Mucosa of descending colon (tissue), 3 donors: ENCODE measurements at regions of chr9 and their contacts with region 1.

Region 1: DNA sequence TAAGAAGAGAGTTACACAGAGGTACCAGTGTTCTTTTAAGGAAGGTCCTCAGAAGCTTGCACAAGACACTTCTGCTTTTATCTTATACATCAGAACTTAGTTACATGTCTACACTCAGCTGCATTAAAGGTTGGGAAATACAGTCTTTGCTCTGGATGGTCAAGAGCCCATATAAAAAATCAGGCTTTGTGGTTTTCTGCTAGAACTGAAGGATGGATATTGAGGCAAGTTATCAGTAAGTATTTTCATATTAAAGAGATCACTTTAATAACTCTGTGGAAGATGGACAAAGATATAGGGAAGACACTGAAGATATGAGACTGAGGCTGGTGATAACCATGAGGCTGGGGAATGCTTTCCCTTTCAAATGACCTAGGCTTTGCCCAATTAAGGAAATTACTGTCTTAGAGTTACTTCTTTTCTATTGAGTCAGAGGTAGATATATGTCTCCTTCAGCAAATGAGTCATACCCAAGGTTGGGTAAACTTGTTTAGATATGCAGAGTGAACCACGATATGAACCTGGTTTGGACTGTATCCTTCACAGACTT is 87.0 kb upstream of the TNC start:
- DNase-seq: no peak
- ATAC-seq: no peak
- H3K4me3 ChIP-seq: no peak overlapping the region
- H3K4me1 ChIP-seq: no peaks in the 10 kb centered on the region
- CTCF ChIP-seq: no peak

Region 2: DNA sequence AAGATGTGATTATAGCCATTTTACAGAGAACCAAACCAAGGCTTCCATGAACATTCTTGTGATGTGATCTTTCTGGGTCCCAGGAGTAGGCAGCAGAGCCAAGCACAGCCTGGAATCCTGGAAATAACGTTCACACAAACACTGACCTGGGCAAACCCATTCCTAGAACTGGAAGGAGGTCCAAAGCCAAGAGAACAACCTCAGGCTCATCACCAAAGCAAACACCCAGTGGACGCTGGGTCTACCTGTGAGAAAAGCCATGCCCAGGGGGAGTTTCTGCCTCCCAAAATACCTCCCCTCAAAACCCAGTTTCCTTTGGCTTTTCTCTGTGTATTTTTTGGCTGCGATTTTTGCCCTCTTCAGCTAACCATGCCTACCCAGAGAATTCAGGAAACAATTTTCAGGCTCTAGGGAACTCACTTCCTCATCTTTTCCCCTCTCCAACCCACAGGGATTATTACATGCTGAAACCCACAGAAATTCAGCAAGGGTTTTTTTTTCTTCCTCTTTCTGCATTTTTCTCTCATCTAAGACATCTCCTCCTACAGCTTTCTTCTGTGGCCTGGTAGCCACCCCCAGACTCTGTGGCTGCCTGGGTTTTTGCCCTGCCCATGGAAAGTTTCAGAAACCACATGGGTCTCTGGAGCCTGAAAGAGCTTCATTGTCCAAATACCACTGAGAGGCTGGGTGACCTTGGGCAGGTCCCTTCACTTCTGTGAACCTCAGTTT is 162.0 kb before region 1 on chr9:
- intact Hi-C with region 1: loop called in 1 of 2 experiments (anchors 10 kb)
- DNase-seq: no peak
- ATAC-seq: no peak
- H3K4me3 ChIP-seq: no peak overlapping the region
- H3K4me1 ChIP-seq: no peaks in the 10 kb centered on the region
- CTCF ChIP-seq: no peak

Region 3: DNA sequence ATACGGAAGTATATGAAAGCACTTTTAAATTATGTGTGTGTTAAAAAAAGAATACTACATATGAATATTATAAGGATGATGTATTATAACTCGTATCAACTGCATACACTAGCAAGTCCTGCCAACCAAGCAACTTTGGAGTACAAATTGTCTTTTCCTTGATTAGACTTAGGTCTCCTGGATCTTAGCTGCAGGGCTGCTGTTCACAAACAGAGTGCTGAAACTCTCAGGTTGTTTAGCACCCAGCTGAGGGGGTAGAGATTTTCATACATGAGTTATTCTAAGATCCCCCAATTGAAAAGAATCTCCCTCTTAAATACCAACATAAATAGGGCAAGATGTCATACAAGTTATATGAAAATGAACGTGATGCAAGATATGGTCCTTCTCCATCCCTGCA is 62.8 kb after region 1 on chr9:
- intact Hi-C with region 1: no loop called
- DNase-seq: no peak
- ATAC-seq: no peak
- H3K4me3 ChIP-seq: no peak overlapping the region
- H3K4me1 ChIP-seq: no peaks in the 10 kb centered on the region
- CTCF ChIP-seq: no peak